Activated T-helper 2 cell treated with anti-CD3 and anti-CD28 coated beads, Interferon-gamma antibody, Interleukin-2, Interleukin-4, amounts not matched to agents 10 μg/mL and 5 μg/mL and 100 μg/mL, durations not matched to agents 14 hours and 24 hours and 36 hours (primary cell): ENCODE measurements at regions of chr6 and their contacts with region 1.

Region 1: DNA sequence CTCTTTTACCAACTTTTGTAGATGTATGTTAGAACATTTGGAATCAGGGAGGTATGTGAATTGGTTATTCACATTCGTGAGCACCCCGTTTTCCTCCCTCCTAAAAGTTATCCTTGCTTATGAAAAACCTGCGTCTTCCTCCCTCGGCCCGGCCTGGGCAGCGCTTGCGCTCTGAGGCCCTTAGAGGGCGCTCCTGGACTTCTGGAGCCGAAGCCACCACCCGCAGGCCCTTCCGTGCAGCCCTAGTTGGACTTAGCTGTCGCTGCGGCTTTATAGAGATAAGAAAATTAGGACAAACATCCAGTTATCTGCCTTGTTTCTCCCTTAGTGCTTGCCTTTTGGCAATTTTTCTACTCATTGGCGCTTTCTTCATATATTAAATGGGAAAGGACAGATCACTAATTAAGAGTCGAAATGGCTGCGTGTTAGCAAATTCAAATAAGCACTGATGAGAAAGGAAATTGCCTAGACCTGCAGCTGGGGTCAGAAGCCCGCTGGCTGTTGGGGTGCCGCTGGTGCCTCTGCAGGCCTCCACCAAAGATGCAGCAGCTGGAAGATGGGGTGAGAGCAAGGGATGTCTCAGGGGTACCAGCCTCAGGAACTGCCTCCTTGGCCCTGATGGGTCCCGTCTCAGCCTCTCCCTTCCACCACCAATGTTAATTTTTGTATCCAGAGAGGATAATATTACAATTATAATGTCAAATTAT is 5.2 kb downstream of the FNDC1 start:
- DNase-seq: peak; percentile 57
- H3K4me3 Mint-ChIP-seq: peak overlapping the region; percentile 22
- H3K27ac Mint-ChIP-seq: no peak overlapping the region
- H3K4me1 Mint-ChIP-seq: peaks cover 4% of the 10 kb centered on the region
- H3K27me3 Mint-ChIP-seq: peaks cover 60% of the 10 kb centered on the region

Region 2: GRCh38 chr6:159084493-159085091 is 89.8 kb before region 1 on chr6:
- intact Hi-C with region 1: no loop called
- DNase-seq: no peak
- H3K4me3 Mint-ChIP-seq: no peak overlapping the region
- H3K27ac Mint-ChIP-seq: no peak overlapping the region
- H3K4me1 Mint-ChIP-seq: peaks cover 18% of the 10 kb centered on the region
- H3K27me3 Mint-ChIP-seq: no peaks in the 10 kb centered on the region

Region 3: GRCh38 chr6:159463119-159463829 is 288.9 kb after region 1 on chr6:
- intact Hi-C with region 1: loop called (anchors 2 kb)
- DNase-seq: no peak
- H3K4me3 Mint-ChIP-seq: no peak overlapping the region
- H3K27ac Mint-ChIP-seq: no peak overlapping the region
- H3K4me1 Mint-ChIP-seq: peaks cover 4% of the 10 kb centered on the region
- H3K27me3 Mint-ChIP-seq: peaks cover 11% of the 10 kb centered on the region

Region 4: GRCh38 chr6:159654483-159655098 is 480.2 kb after region 1 on chr6:
- intact Hi-C with region 1: loop called (anchors 2 kb)
- DNase-seq: no peak
- H3K4me3 Mint-ChIP-seq: no peak overlapping the region
- H3K27ac Mint-ChIP-seq: no peak overlapping the region
- H3K4me1 Mint-ChIP-seq: no peaks in the 10 kb centered on the region
- H3K27me3 Mint-ChIP-seq: peaks cover 3% of the 10 kb centered on the region